H1 (cell line): ENCODE measurements at regions of chr17 and their contacts with region 1.

Region 1: DNA sequence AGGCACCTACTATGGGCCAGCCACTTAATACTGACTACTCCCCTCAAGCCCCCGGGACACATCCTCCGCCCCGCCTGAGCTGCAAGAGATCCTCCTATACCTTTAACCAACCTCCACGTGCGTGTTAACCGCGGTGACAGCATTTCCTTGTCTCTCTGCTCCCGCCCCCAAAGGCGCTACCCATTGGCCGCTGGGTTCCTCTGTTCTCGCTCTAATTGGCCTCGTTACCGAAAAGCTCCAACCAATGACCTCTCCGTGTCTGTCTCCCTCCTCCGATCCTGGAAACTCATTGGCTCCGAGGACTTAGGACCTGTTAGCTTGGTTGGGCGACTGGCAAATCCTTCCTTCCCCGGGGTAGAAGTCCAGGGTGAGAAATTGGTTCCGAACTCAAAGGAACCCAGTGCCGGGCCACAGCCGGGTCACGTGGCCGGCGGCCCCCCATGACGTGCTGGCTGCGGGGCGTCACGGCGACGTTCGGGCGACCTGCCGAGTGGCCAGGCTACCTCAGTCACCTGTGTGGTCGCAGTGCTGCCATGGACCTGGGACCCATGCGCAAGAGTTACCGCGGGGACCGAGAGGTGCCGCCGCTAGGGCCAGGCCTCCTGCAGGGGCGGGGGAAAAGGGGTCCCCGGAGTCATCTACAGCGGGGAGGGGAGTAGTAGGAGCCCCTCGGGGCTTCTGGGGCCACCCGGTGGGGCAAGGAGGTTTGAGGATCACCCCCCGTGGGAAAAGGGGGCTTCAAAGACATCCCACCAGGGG is at the start of gene PNPO:
- DNase-seq: peak; percentile 56 to 77
- H3K4me3 ChIP-seq: peak within 1 kb of the TSS; percentile 17 to 58 (median 35); a peak in 7 of 8 replicates
- H3K27ac ChIP-seq: no peak within 1 kb of the TSS
- H3K4me1 ChIP-seq: peaks cover 0 to 1% (median 0%) of the 10 kb centered on the region in 4 experiments; a peak in 1 of 7 replicates
- H3K27me3 ChIP-seq: peaks cover 0 to 12% (median 7%) of the 10 kb centered on the region in 4 experiments; a peak in 5 of 7 replicates
- CTCF ChIP-seq: no peak
- EP300 ChIP-seq: no peak
- POLR2A ChIP-seq: no peak
- RAD21 ChIP-seq: no peak
- total RNA-seq, gene PNPO: 7.0 and 8.8 TPM in 2 replicates

Region 2: GRCh38 chr17:47889734-47890529 is 51.5 kb before region 1 on chr17:
- CTCF ChIA-PET with region 1: interaction called, 25 read pairs
- POLR2A ChIA-PET with region 1: interaction called, 7 read pairs
- DNase-seq: peak; percentile 73 to 97
- H3K4me3 ChIP-seq: no peak overlapping the region
- H3K27ac ChIP-seq: no peak overlapping the region
- H3K4me1 ChIP-seq: peaks cover 0 to 9% (median 7%) of the 10 kb centered on the region in 4 experiments; a peak in 6 of 7 replicates
- H3K27me3 ChIP-seq: no peaks in the 10 kb centered on the region
- CTCF ChIP-seq: peak; percentile 87 to 98 (median 95)
- EP300 ChIP-seq: no peak
- POLR2A ChIP-seq: no peak
- RAD21 ChIP-seq: peak; percentile 99

Region 3: GRCh38 chr17:47929218-47930000 is 12.0 kb before region 1 on chr17:
- CTCF ChIA-PET with region 1: interaction called, 154 read pairs
- POLR2A ChIA-PET with region 1: interaction called, 8 read pairs
- DNase-seq: no peak
- H3K4me3 ChIP-seq: no peak overlapping the region
- H3K27ac ChIP-seq: no peak overlapping the region
- H3K4me1 ChIP-seq: no peaks in the 10 kb centered on the region
- H3K27me3 ChIP-seq: no peaks in the 10 kb centered on the region
- CTCF ChIP-seq: no peak
- EP300 ChIP-seq: no peak
- POLR2A ChIP-seq: no peak
- RAD21 ChIP-seq: no peak

Region 4: DNA sequence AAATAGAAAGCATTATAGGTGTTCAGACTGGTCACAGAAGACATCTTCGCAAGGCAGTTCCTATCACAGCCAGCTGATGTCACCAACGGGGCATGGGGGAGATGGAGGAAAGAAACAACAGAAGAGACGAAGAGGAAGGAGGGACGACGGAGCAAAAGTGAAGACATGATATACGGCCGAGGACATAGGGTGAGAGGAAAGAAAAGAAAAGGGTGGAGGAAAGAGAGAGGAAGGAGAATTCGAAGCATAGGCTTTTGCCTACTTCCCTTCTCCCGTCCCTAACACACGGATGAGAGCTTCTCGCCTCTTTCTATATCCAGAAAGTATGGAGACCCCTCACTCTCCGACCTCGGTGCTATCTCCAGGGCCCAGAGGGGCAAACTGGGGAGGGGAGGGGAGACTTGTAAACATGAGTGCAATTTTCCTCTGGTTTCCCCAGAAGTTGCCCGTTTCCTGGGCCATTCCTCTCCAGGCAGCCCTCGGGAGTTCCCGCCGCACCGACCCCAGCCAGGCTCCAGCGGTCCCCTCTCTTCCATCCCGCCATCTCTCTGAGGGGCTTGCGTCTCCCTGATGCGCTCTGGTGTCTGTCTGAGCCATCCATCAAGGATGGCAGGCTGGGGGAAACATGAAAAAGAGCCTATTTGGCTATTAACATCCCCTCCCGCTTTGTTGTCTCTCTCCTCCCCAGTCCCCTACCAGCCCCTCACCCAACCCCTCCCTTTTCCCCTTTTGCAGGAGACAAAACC is 70.2 kb after region 1 on chr17:
- CTCF ChIA-PET with region 1: interaction called, 493 read pairs
- POLR2A ChIA-PET with region 1: no interaction called
- DNase-seq: peak in 1 of 2 experiments; percentile 72
- H3K4me3 ChIP-seq: peak overlapping the region; percentile 61 to 75 (median 66)
- H3K27ac ChIP-seq: no peak overlapping the region
- H3K4me1 ChIP-seq: peaks cover 4 to 14% (median 9%) of the 10 kb centered on the region in 4 experiments
- H3K27me3 ChIP-seq: peaks cover 0 to 13% (median 8%) of the 10 kb centered on the region in 4 experiments; a peak in 6 of 7 replicates
- CTCF ChIP-seq: peak; percentile 40 to 66 (median 63)
- EP300 ChIP-seq: no peak
- POLR2A ChIP-seq: no peak
- RAD21 ChIP-seq: peak; percentile 45 to 60; a peak in 3 of 4 replicates